ENCODE measurements at regions of chr17 and their contacts with region 1.

Region 1: DNA sequence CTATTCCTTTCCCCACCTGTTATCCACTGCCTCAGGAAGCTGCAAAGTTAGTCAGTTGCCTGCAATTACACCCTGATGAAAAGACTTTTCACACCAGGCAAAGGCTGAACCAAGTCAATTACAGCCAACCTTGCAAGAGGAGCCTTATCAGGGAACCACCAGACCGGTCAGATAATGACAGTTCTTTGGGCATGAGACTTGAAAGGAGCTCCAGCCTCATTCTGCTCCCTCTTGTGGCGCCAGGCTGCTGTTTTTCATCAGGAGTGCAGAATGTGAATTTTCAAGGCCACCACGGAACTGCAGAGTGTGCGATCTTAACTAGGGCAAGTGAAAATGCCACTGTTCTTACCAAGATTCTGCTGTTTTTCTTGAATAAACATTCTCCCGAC is 22.5 kb downstream of the DNAI2 start:
- DNase-seq: peak; percentile 69
- H3K4me3 Mint-ChIP-seq: no peak overlapping the region
- H3K27ac Mint-ChIP-seq: peak overlapping the region; percentile 44
- H3K4me1 Mint-ChIP-seq: peaks cover 30% of the 10 kb centered on the region
- H3K27me3 Mint-ChIP-seq: no peaks in the 10 kb centered on the region

Region 2: DNA sequence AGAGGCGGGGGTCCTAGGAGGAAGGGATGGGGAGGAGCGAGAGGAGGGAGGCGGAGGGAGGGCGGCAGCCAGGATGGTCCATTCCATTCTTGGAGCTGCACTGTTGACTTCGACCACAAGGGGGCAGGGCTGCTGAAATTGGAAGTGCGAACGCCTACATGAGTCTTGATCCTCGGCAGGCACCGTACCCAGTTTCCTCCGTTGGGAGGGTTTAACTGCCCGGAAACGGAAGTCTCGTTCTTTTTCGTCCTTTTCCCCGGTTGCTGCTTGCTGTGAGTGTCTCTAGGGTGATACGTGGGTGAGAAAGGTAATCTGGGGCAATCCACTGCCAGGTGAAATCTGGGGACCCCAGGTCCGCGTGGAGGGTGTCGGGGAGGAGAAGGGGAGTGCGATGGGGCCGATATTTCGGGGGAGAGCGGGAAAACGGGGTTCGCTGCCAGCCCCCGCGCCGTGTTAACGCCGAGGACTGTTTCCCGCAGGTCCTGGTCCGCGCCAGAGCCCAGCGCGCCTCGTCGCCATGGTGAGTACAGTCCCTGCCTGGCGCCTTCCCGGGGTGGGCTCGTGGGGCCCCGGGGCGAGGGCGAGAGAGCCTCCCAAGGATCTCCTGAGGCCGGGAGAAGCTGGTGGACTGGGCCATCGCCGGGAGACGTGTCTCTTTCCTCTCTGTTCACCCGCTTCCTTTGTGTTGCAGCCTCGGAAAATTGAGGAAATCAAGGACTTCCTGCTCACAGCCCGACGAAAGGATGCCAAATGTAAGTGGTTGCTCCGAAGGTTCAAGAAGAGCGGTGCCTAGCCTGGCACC is 92.9 kb before region 1 on chr17 and contains the start of gene RPL38:
- CTCF ChIA-PET with region 1: interaction called, 11 read pairs
- POLR2A ChIA-PET with region 1: interaction called, 10 read pairs
- DNase-seq: peak; percentile 96
- H3K4me3 Mint-ChIP-seq: peak within 1 kb of the TSS; percentile 98
- H3K27ac Mint-ChIP-seq: peak within 1 kb of the TSS; percentile 91
- H3K4me1 Mint-ChIP-seq: peaks cover 45% of the 10 kb centered on the region
- H3K27me3 Mint-ChIP-seq: peaks cover 24% of the 10 kb centered on the region
- total RNA-seq, gene RPL38: 1,064 to 1,066 TPM

Region 3: GRCh38 chr17:74212913-74213791 is 83.4 kb before region 1 on chr17 and contains the start of gene TTYH2:
- CTCF ChIA-PET with region 1: interaction called, 50 read pairs
- POLR2A ChIA-PET with region 1: interaction called, 15 read pairs
- DNase-seq: peak; percentile 82
- H3K4me3 Mint-ChIP-seq: peak within 1 kb of the TSS; percentile 82
- H3K27ac Mint-ChIP-seq: peak within 1 kb of the TSS; percentile 77
- H3K4me1 Mint-ChIP-seq: peaks cover 76% of the 10 kb centered on the region
- H3K27me3 Mint-ChIP-seq: no peaks in the 10 kb centered on the region
- total RNA-seq, gene TTYH2: 23.8 to 25.6 TPM

Region 4: DNA sequence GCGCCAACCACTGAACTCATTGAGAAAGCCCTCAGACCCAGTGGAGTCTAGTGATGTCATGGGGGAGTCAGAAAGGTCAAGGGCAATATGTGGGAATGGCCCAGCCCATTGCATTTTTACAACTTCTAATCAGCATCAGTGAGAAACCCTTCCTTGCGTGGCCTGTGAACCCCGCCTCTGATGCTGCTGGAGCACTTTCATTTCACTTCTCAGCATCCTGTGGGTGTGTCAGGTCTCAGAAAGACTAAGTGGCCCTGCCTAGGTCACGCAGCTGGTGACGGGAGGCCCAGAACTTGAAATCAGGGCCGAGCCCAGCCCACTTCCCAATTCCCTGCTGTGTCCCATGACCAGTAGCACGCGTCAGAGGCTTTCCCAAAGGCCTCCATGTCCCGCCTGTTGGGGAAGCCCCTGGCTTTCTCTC is 16.4 kb before region 1 on chr17:
- CTCF ChIA-PET with region 1: interaction called, 58 read pairs
- POLR2A ChIA-PET with region 1: interaction called, 12 read pairs
- DNase-seq: peak; percentile 85
- H3K4me3 Mint-ChIP-seq: no peak overlapping the region
- H3K27ac Mint-ChIP-seq: peak overlapping the region; percentile 100
- H3K4me1 Mint-ChIP-seq: peaks cover 83% of the 10 kb centered on the region
- H3K27me3 Mint-ChIP-seq: no peaks in the 10 kb centered on the region

Region 5: DNA sequence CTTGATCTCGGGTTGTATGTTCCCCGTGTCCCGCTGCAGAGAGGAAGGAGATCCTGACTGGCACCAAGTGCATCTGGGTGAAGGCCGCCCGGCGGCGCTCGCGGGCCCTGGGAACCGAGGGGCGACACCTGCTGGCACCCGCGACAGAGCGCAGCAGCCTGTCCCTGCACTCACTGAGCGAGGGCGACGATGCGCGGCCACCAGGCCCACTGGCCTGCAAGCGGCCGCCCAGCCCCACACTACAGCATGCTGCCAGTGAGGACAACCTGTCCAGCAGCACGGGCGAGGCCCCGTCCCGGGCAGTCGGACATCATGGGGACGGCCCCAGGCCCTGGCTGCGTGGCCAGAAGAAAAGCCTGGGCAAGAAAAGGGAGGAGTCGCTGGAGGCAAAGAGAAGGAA is 57.6 kb after region 1 on chr17:
- CTCF ChIA-PET with region 1: interaction called, 42 read pairs
- POLR2A ChIA-PET with region 1: interaction called, 4 read pairs
- DNase-seq: peak; percentile 76
- H3K4me3 Mint-ChIP-seq: no peak overlapping the region
- H3K27ac Mint-ChIP-seq: no peak overlapping the region
- H3K4me1 Mint-ChIP-seq: peaks cover 7% of the 10 kb centered on the region
- H3K27me3 Mint-ChIP-seq: peaks cover 67% of the 10 kb centered on the region

Region 6: DNA sequence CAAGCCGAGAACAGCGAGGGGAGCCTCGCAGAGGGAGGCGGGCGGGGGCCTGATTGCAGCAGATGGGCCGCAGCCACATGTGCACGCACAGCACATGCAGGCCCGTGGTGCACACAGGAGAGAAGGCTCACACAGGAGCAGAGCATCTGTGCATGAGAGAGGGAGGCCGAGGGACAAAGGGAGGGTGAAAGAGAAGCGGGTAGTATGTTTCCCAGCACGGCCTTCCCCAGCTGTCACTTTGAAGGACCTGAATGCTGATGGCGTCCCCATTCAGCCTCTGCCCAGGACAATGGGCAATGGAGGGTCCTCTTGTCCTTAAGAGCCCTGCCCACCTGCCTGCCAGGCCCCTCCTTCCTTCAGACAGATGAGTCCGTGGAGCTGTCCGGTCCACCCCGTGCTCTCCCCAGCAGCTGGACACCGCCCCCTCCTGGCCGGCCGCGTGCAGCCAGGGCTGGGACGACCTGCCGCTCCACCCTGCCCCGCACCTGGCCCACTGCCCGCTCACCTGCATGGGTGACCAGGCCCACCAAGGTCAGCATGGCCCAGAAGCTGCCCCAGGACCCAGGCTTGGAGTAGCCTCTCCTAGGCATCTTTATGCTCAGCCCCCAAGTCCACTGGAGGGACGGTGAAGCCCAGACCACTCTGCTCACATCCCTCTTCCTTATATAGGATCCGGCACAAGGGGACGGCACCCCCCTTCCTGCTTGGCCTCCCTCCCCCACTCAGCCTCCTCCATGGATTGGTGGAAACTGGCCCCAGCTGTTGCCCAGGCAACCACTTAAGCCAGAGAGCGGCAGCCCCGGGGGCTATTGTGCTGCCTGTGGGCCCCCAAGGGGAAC is 64.9 kb after region 1 on chr17 and contains the start of gene BTBD17:
- CTCF ChIA-PET with region 1: interaction called, 42 read pairs
- POLR2A ChIA-PET with region 1: interaction called, 4 read pairs
- DNase-seq: peak; percentile 48
- H3K4me3 Mint-ChIP-seq: no peak within 1 kb of the TSS
- H3K27ac Mint-ChIP-seq: no peak within 1 kb of the TSS
- H3K4me1 Mint-ChIP-seq: peaks cover 3% of the 10 kb centered on the region
- H3K27me3 Mint-ChIP-seq: peaks cover 24% of the 10 kb centered on the region
- total RNA-seq, gene BTBD17: 0.18 TPM in 1 of 2 experiments, not detected in the other

Region 7: DNA sequence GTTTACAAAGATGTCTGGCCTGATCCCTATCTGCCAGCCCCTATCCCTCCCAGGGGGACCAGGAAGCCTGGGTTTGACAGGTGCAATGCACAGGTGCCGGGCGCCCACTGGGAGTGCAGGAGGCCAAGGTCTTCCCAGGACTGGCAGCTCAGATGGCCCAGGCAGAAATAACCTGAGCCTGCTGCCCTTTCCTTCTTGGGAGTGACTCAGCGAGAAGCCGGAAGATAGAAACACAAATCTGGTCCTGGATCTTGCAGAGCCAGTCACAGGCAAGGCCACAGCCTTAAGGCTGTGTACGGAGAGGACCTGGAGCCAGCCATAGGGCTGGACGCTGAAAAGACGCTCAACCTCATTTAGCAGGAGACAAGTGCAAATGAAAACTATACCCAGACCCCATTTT is 98.4 kb after region 1 on chr17:
- CTCF ChIA-PET with region 1: no interaction called
- POLR2A ChIA-PET with region 1: no interaction called
- DNase-seq: no peak
- H3K4me3 Mint-ChIP-seq: no peak overlapping the region
- H3K27ac Mint-ChIP-seq: no peak overlapping the region
- H3K4me1 Mint-ChIP-seq: peaks cover 3% of the 10 kb centered on the region
- H3K27me3 Mint-ChIP-seq: peaks cover 13% of the 10 kb centered on the region